PC-3 (cell line): ENCODE measurements at regions of chr2 and their contacts with region 1.

Region 1: DNA sequence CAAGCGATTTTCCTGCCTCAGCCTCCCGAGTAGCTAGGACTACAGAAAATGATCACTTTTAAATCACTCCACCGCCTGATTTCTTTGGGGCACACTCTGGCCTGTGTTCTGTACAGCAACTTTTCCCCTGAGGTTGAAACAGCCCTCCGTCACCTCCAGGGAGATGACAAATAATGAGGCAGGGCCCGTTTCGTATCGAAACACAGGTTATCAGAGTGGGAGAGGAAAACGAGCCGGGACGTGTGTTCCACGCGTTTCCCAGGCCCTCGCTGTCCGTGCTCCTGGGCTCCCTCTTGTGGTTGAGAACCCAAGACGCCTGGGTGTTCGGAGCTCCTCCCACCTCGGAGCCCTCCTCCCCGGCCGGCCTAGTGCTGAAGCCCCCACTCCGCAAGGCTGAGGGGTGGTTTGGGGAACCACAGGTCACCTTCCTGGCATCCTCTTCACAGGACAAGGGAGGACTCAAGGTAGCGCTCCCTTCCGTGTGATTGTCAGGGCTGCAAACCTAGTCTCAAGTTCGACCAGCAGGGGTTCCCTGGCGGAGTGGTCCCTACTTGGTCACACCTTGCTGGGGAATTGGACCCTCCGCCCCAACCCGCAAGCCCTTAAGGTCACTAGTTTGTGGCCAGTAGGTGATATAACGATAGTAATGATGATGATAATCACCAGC is 12.8 kb downstream of the ATP6V1B1 start:
- DNase-seq: peak; percentile 85
- ATAC-seq: peak; percentile 86
- H3K4me3 ChIP-seq: peak overlapping the region; percentile 70
- H3K27ac ChIP-seq: no peak overlapping the region
- H3K4me1 ChIP-seq: peaks cover 28% of the 10 kb centered on the region
- H3K27me3 ChIP-seq: peaks cover 3% of the 10 kb centered on the region
- CTCF ChIP-seq: peak; percentile 87

Region 2: GRCh38 chr2:70656421-70657010 is 292.0 kb before region 1 on chr2:
- CTCF ChIA-PET with region 1: no interaction called
- POLR2A ChIA-PET with region 1: no interaction called
- intact Hi-C with region 1: loop called (anchors 10 kb)
- DNase-seq: no peak
- ATAC-seq: no peak
- H3K4me3 ChIP-seq: no peak overlapping the region
- H3K27ac ChIP-seq: no peak overlapping the region
- H3K4me1 ChIP-seq: no peaks in the 10 kb centered on the region
- H3K27me3 ChIP-seq: peaks cover 59% of the 10 kb centered on the region
- CTCF ChIP-seq: no peak

Region 3: GRCh38 chr2:70789304-70790135 is 158.9 kb before region 1 on chr2:
- CTCF ChIA-PET with region 1: interaction called, 3 read pairs
- POLR2A ChIA-PET with region 1: no interaction called
- intact Hi-C with region 1: loop called (anchors 5 kb)
- DNase-seq: peak; percentile 73
- ATAC-seq: peak; percentile 90
- H3K4me3 ChIP-seq: peak overlapping the region; percentile 29
- H3K27ac ChIP-seq: no peak overlapping the region
- H3K4me1 ChIP-seq: no peaks in the 10 kb centered on the region
- H3K27me3 ChIP-seq: peaks cover 58% of the 10 kb centered on the region
- CTCF ChIP-seq: peak; percentile 84

Region 4: DNA sequence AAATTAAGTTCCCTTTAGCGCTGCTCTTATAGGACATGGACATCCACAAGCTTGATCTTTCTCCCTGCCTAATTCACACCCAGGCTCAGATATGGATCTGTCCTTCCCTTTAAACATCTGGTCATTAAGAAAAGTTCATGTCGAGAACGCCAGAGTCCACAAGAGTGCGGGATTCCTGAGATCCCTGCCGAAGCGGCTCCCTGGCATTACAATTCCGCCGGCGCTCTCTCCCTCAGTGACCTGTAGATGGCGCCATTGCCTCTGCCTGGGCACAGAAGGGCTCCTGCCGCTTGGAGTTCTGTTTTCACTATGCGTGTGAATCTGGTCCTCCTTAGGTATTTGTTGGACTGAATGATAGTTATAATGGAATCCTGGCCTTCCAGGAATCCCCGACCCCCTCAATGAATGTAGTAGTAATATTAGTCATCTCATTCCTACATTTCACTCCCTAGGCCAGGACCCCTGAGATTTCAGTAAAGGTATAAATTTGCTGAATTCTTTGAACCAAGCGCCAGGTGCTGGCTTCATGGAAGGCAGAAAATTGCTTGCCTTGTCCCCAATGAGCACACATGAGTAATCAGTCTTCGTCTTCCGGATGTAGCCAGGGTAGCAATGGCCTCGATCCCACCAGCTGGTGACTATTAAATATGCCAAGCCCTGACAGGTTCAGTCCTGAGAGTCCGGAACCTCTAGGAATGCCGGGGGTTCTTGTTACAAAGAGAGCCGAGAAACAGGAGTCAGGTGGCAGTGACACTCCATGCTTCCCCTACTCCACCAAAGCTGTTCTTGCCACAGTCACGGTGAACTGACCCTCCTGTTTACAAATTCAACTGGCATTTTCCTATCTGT is 86.5 kb before region 1 on chr2:
- CTCF ChIA-PET with region 1: no interaction called
- POLR2A ChIA-PET with region 1: no interaction called
- intact Hi-C with region 1: loop called (anchors 2 kb)
- DNase-seq: peak; percentile 87
- ATAC-seq: peak; percentile 97
- H3K4me3 ChIP-seq: no peak overlapping the region
- H3K27ac ChIP-seq: no peak overlapping the region
- H3K4me1 ChIP-seq: no peaks in the 10 kb centered on the region
- H3K27me3 ChIP-seq: peaks cover 44% of the 10 kb centered on the region
- CTCF ChIP-seq: peak; percentile 98

Region 5: GRCh38 chr2:70871398-70872211 is 76.9 kb before region 1 on chr2:
- CTCF ChIA-PET with region 1: interaction called, 8 read pairs
- POLR2A ChIA-PET with region 1: no interaction called
- intact Hi-C with region 1: loop called (anchors 1 kb)
- DNase-seq: peak; percentile 89
- ATAC-seq: peak; percentile 99
- H3K4me3 ChIP-seq: peak overlapping the region; percentile 48; the same call in 1 of the 2 replicates
- H3K27ac ChIP-seq: no peak overlapping the region
- H3K4me1 ChIP-seq: no peaks in the 10 kb centered on the region; the same call in 1 of the 2 replicates
- H3K27me3 ChIP-seq: peaks cover 23% of the 10 kb centered on the region
- CTCF ChIP-seq: peak; percentile 92

Region 6: DNA sequence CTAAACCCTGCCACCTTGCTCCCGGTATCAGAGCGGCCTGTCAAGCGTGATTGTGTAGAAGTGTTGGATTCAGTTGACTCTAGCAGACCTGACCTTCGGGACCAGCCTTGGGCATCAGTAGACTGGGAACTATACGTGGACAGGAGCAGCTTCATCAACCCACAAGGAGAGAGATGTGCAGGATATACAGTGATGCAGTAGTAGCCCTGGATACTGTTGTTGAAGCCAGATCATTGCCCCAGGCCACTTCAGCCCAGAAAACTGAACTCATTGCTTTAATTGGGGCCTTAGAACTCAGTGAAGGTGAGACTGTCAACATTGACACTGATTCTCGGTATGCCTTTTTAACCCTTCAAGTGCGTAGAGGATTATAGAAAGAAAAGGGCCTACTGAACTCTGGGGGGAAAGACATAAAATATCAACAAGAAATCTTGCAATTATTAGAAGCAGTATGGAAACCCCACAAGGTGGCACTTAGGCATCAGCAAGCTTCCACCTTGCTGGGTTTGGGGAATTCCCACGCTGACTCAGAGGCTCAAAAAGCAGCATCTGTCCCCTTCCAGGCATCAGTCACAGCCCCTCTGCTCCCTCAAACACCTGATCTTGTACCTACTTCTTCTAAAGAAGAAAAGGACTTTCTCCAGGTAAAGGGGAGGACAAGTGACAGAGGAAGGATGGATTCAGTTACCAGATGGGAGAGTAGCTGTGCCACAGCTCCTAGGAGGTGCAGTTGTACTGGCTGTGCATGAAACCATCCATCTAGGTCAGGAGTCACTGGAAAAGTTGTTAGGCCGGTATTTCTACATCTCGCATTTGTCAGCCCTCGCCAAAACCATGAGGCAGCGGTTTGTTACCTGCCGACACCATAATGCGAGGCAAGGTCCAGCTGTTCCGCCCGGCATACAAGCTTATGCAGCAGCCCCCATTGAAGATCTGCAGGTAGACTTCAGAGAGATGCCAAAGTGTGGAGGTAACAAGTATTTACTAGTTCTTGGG is 101.2 kb after region 1 on chr2:
- CTCF ChIA-PET with region 1: no interaction called
- POLR2A ChIA-PET with region 1: no interaction called
- intact Hi-C with region 1: no loop called
- DNase-seq: peak; percentile 81
- ATAC-seq: peak; percentile 24; the same call in 1 of the 2 replicates
- H3K4me3 ChIP-seq: peak overlapping the region; percentile 23; the same call in 1 of the 2 replicates
- H3K27ac ChIP-seq: peak overlapping the region; percentile 75
- H3K4me1 ChIP-seq: peaks cover 30% of the 10 kb centered on the region
- H3K27me3 ChIP-seq: no peaks in the 10 kb centered on the region
- CTCF ChIP-seq: peak; percentile 50; the same call in 1 of the 2 replicates

Region 7: DNA sequence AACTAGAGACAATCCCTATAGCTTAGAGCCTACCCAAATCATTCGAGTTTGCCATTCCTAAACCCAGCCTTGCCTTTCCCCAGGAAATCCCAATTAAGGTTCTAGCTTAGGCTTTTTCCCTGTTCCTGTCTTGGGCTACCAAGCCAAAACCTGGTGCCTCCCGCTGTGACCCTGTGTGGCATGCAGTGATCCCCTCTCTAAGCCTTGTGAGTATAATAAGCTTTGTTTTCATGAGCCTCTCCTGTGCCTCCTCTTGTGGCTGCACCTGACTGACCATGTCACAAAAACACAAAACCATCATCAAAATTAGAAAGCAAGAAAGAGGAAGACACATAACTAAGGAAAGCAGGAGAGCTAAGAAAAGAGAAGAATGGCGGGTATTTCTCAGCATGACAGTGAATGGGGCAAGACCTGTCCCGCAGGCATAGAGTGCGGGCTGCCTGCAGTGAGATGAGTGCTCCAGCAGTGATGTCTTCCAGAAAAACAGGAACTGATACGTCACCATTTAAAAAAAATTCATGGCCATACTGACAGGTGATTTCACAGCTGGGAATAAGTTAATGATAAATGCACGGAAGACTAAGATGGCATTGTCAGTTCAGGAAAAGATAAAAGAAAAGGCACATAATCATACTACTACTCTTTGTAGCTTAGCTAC is 287.6 kb after region 1 on chr2:
- CTCF ChIA-PET with region 1: no interaction called
- POLR2A ChIA-PET with region 1: no interaction called
- intact Hi-C with region 1: no loop called
- DNase-seq: no peak
- ATAC-seq: no peak
- H3K4me3 ChIP-seq: no peak overlapping the region
- H3K27ac ChIP-seq: no peak overlapping the region
- H3K4me1 ChIP-seq: no peaks in the 10 kb centered on the region
- H3K27me3 ChIP-seq: peaks cover 29% of the 10 kb centered on the region
- CTCF ChIP-seq: no peak